ENCODE measurements at regions of chr2 and their contacts with region 1.

Region 1: GRCh38 chr2:56183643-56184499 is at the start of gene CCDC85A:
- DNase-seq: peak; percentile 50 to 65
- ATAC-seq: peak; percentile 90 to 92
- H3K4me3 ChIP-seq: peak within 1 kb of the TSS; percentile 67 to 88 (median 70)
- H3K27ac ChIP-seq: peak within 1 kb of the TSS; percentile 59 to 73 (median 70)
- H3K4me1 ChIP-seq: peaks cover 2 to 13% of the 10 kb centered on the region in 2 donors
- H3K27me3 ChIP-seq: peaks cover 0 to 5% (median 0%) of the 10 kb centered on the region in 3 donors
- CTCF ChIP-seq: peak; percentile 74 to 95 (median 88)
- POLR2A ChIP-seq: no peak
- total RNA-seq, gene CCDC85A: 4.6 to 8.2 (median 6.1) TPM

Region 2: GRCh38 chr2:56749152-56749752 is 565.4 kb after region 1 on chr2:
- in situ Hi-C with region 1: loop called (anchors 5 to 25 kb)
- intact Hi-C with region 1: loop called (anchors 1 kb)
- DNase-seq: no peak
- ATAC-seq: no peak
- H3K4me3 ChIP-seq: no peak overlapping the region
- H3K27ac ChIP-seq: no peak overlapping the region
- H3K4me1 ChIP-seq: no peaks in the 10 kb centered on the region
- H3K27me3 ChIP-seq: no peaks in the 10 kb centered on the region
- CTCF ChIP-seq: peak; percentile 16 to 59 (median 30)
- POLR2A ChIP-seq: no peak

Region 3: DNA sequence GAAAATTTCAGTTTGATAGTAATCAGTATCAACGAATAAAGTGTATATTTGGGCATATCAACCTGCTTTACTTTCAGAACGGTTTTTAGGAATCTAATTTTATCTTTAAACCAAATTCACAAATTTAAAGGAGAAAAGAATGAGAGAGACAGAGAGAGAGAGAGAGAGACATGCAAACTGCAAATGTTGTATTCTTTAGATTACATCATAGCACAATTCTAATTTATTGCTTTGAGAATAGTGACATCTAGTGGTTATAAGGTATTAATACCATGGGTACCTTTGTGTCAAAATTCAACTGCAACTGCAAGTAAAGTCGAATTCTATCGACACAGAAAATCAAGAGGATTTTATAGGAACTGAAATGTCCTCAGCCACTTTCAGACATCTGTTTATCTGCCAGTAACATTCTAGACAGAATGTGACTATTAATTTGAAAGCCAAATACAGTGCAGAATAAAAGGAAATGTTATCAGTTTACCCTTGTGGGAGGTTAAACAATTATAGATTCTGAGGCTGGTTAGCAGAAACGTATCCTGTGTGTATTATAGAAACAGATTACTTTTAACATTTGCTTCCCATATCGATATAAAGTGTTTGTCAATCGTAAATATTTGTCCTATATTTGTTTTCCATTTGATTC is 1332.9 kb after region 1 on chr2:
- in situ Hi-C with region 1: loop called (anchors 25 kb)
- intact Hi-C with region 1: no loop called
- DNase-seq: no peak
- ATAC-seq: peak in 1 of 2 donors; percentile 73
- H3K4me3 ChIP-seq: no peak overlapping the region
- H3K27ac ChIP-seq: no peak overlapping the region
- H3K4me1 ChIP-seq: no peaks in the 10 kb centered on the region
- H3K27me3 ChIP-seq: no peaks in the 10 kb centered on the region
- CTCF ChIP-seq: peak in 4 of 5 experiments; percentile 52 to 59 (median 55)
- POLR2A ChIP-seq: no peak